ENCODE measurements at regions of chr17 and their contacts with region 1.

Region 1: DNA sequence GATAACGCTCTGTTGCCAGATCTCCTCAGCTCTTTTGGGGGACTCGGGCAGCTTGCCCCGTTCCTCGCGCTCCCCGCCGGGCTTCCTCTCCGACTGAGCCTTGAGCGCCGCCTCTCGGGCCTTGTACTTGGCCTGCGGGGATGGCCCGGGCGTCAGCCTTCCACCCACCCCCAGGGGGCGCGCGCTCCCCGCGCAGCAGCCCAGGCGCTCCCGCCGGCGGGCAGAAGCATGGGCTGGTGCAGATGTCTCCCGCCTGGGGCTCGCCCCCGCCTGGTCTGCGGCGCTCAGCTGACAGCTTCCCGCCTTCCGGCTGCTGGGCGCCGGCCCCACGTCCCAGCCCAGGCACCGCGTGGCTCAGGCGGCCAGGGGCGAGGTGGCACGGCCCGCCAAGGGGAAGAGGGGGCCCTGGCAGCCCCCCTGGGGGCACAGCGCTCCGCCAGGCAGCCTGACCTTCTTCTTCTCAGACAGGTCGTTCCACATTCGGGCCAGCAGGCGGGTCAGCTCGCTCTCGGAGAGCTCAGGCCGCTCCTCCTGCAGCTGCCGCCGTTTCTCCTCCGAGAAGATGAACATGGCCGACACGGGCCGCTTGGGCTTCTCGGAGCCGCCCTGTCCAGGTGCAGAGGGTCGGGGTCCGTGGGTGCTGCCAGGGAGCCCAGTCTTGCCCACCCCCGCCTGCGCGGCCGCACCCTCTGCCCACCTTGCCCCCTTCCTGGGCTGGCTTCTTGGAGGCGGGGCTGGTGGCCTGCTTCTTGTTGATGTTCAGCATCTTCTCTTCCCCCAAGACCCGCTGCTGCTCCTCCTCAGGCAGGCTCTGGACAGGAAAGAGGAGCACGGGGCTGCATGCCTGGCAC is 8.9 kb downstream of the UBTF start:
- DNase-seq: peak; percentile 82 to 94 (median 88)
- ATAC-seq: peak; percentile 94
- H3K4me3 ChIP-seq: no peak overlapping the region
- H3K27ac ChIP-seq: peak overlapping the region; percentile 61; the same call in 1 of the 3 replicates
- H3K4me1 ChIP-seq: peaks cover 12 to 51% of the 10 kb centered on the region in 2 experiments; a peak in 4 of 5 replicates
- H3K27me3 ChIP-seq: no peaks in the 10 kb centered on the region
- CTCF ChIP-seq: peak; percentile 99 to 100 (median 99)
- EP300 ChIP-seq: peak; percentile 28; the same call in 1 of the 2 replicates
- POLR2A ChIP-seq: peak; percentile 13; the same call in 1 of the 2 replicates
- RAD21 ChIP-seq: peak; percentile 99

Region 2: GRCh38 chr17:44236444-44236991 is 26.0 kb after region 1 on chr17:
- CTCF ChIA-PET with region 1: no interaction called
- POLR2A ChIA-PET with region 1: no interaction called
- in situ Hi-C with region 1: no loop called
- intact Hi-C with region 1: no loop called
- DNase-seq: peak in 2 of 4 experiments; percentile 44 to 47
- ATAC-seq: peak; percentile 44; the same call in 2 of the 3 replicates
- H3K4me3 ChIP-seq: no peak overlapping the region
- H3K27ac ChIP-seq: no peak overlapping the region
- H3K4me1 ChIP-seq: peaks cover 6 to 16% of the 10 kb centered on the region in 2 experiments; a peak in 2 of 5 replicates
- H3K27me3 ChIP-seq: no peaks in the 10 kb centered on the region
- CTCF ChIP-seq: no peak
- EP300 ChIP-seq: no peak
- POLR2A ChIP-seq: no peak
- RAD21 ChIP-seq: no peak

Region 3: GRCh38 chr17:44266402-44267164 is 56.0 kb after region 1 on chr17:
- CTCF ChIA-PET with region 1: interaction called, 4 read pairs
- POLR2A ChIA-PET with region 1: interaction called, 4 read pairs
- in situ Hi-C with region 1: no loop called
- intact Hi-C with region 1: loop called (anchors 1 kb)
- DNase-seq: peak; percentile 93 to 97 (median 96)
- ATAC-seq: peak; percentile 90
- H3K4me3 ChIP-seq: no peak overlapping the region
- H3K27ac ChIP-seq: no peak overlapping the region
- H3K4me1 ChIP-seq: peaks cover 37 to 52% of the 10 kb centered on the region in 2 experiments
- H3K27me3 ChIP-seq: no peaks in the 10 kb centered on the region
- CTCF ChIP-seq: peak; percentile 68 to 74 (median 72)
- EP300 ChIP-seq: peak; percentile 98
- POLR2A ChIP-seq: no peak
- RAD21 ChIP-seq: peak; percentile 38 to 76

Region 4: DNA sequence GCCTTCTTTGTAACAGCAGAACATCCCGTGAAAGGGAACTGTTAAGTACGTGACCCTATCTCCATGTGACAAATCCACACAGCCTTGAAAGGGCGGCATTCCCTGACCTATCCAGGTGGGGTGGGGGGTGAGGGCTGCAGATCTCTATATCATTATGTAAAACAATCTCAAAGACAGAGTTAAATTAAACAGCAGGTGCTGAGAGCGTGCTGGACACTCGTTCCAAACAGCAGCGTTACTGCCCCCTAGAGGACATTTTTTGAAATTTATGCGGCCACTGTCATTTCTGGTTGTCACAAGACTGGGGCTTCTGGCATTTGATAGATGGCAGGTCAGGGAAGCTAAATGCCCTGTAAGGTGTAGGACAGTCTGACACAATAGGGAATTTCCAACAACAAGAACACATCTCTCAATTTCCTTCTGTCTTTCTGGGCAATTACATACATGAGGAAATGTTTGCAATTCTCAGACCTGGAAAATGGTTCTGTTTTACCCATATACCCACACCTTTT is 120.7 kb after region 1 on chr17:
- CTCF ChIA-PET with region 1: interaction called, 20 read pairs
- POLR2A ChIA-PET with region 1: interaction called, 9 read pairs
- in situ Hi-C with region 1: loop called (anchors 5 kb)
- intact Hi-C with region 1: loop called (anchors 1 kb)
- DNase-seq: peak; percentile 68 to 90 (median 70)
- ATAC-seq: peak; percentile 64
- H3K4me3 ChIP-seq: no peak overlapping the region
- H3K27ac ChIP-seq: no peak overlapping the region
- H3K4me1 ChIP-seq: peaks cover 8 to 18% of the 10 kb centered on the region in 2 experiments; a peak in 4 of 5 replicates
- H3K27me3 ChIP-seq: no peaks in the 10 kb centered on the region
- CTCF ChIP-seq: peak; percentile 84 to 89 (median 88)
- EP300 ChIP-seq: no peak
- POLR2A ChIP-seq: no peak
- RAD21 ChIP-seq: peak; percentile 62 to 78

Region 5: GRCh38 chr17:44350733-44351226 is 140.2 kb after region 1 on chr17:
- CTCF ChIA-PET with region 1: interaction called, 42 read pairs
- POLR2A ChIA-PET with region 1: interaction called, 6 read pairs
- in situ Hi-C with region 1: no loop called
- intact Hi-C with region 1: loop called (anchors 1 kb)
- DNase-seq: peak; percentile 77 to 85 (median 80)
- ATAC-seq: peak; percentile 93
- H3K4me3 ChIP-seq: no peak overlapping the region
- H3K27ac ChIP-seq: no peak overlapping the region
- H3K4me1 ChIP-seq: peaks cover 3 to 46% of the 10 kb centered on the region in 2 experiments; a peak in 3 of 5 replicates
- H3K27me3 ChIP-seq: no peaks in the 10 kb centered on the region
- CTCF ChIP-seq: peak; percentile 82 to 87 (median 86)
- EP300 ChIP-seq: no peak
- POLR2A ChIP-seq: no peak
- RAD21 ChIP-seq: peak; percentile 48 to 75